GM12878 (cell line): ENCODE measurements at regions of chr15 and their contacts with region 1.

Region 1: DNA sequence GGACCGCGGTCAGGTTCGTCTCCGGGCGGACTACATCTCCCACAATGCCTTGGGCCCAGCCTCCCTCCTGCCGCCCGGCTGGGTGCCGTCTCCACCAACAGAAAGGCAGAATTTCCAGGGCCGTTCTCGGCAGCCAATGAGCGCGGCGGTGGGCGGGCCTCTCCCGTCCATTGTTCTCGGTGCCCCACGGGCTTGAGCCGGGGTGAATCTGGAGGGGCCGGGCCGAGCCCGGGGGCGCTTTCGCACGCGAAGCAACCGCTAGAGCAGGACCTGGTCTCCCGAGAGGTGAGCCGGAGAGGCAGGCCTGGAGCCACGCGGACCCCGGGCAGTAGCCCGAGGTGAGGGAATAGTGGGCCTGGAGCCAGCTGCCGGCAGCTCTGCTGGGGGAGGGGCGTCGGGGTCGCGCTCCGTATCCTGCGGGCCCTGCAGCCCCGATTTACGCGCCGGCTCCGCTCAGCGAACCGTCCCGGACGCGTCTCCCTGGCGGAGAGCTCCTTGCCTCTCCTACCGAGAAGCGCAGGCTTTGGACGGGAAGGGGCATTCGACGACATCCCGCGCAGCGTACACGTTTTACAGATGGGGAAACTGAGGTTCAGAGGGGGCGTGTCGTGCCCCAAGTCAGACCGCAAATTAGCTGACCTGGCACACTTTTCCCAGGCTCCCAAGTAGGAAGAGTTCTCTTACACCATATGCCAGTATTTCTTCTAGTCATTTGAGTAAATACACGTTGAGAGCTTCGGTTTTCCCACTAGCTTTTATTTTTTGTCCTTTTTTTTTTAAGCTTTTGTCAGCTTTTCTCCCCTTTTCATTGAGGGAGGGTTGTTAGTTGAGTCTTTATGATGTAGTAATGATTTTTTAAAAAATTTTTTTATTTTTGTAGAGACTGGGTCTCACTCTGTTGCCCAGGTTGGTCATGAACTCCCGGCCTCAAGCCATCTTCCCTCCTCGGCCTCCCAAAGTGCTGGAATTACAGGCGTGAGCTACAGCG is at the start of gene ZSCAN2:
- DNase-seq: peak; percentile 66
- ATAC-seq: peak; percentile 93
- H3K4me3 ChIP-seq: peak within 1 kb of the TSS; percentile 90
- H3K27ac ChIP-seq: peak within 1 kb of the TSS; percentile 27
- H3K4me1 ChIP-seq: peaks cover 42% of the 10 kb centered on the region
- H3K27me3 ChIP-seq: no peaks in the 10 kb centered on the region
- CTCF ChIP-seq: no peak
- EP300 ChIP-seq: peak in 1 of 2 experiments; percentile 32; a peak in 1 of 4 replicates
- POLR2A ChIP-seq: peak; percentile 71
- RAD21 ChIP-seq: no peak
- polyA plus RNA-seq, gene ZSCAN2: 2.7 to 3.0 TPM

Region 2: GRCh38 chr15:84633311-84634227 is 32.4 kb after region 1 on chr15:
- CTCF ChIA-PET with region 1: interaction called, 23 read pairs
- POLR2A ChIA-PET with region 1: interaction called, 6 read pairs
- RAD21 ChIA-PET with region 1: interaction called, 18 read pairs
- SMC1A ChIA-PET with region 1: interaction called, 22 read pairs
- in situ Hi-C with region 1: no loop called
- intact Hi-C with region 1: loop called (anchors 2 kb)
- DNase-seq: no peak
- ATAC-seq: peak; percentile 67
- H3K4me3 ChIP-seq: peak overlapping the region; percentile 65
- H3K27ac ChIP-seq: peak overlapping the region; percentile 5; the same call in 1 of the 2 replicates
- H3K4me1 ChIP-seq: peaks cover 9% of the 10 kb centered on the region
- H3K27me3 ChIP-seq: no peaks in the 10 kb centered on the region
- CTCF ChIP-seq: no peak
- EP300 ChIP-seq: no peak
- POLR2A ChIP-seq: peak; percentile 54
- RAD21 ChIP-seq: no peak

Region 3: GRCh38 chr15:84748274-84749110 is 147.3 kb after region 1 on chr15 and contains the start of gene ZNF592:
- CTCF ChIA-PET with region 1: interaction called, 3 read pairs
- POLR2A ChIA-PET with region 1: interaction called, 3 read pairs
- RAD21 ChIA-PET with region 1: interaction called, 4 read pairs
- SMC1A ChIA-PET with region 1: interaction called, 4 read pairs
- in situ Hi-C with region 1: no loop called
- intact Hi-C with region 1: loop called (anchors 5 kb)
- DNase-seq: no peak
- ATAC-seq: peak; percentile 51
- H3K4me3 ChIP-seq: peak within 1 kb of the TSS; percentile 84
- H3K27ac ChIP-seq: peak within 1 kb of the TSS; percentile 90
- H3K4me1 ChIP-seq: peaks cover 15% of the 10 kb centered on the region
- H3K27me3 ChIP-seq: no peaks in the 10 kb centered on the region
- CTCF ChIP-seq: peak in 2 of 3 experiments; percentile 25; a peak in 3 of 6 replicates
- EP300 ChIP-seq: no peak
- POLR2A ChIP-seq: peak; percentile 50
- RAD21 ChIP-seq: no peak
- polyA plus RNA-seq, gene ZNF592: 0.95 to 1.3 TPM

Region 4: DNA sequence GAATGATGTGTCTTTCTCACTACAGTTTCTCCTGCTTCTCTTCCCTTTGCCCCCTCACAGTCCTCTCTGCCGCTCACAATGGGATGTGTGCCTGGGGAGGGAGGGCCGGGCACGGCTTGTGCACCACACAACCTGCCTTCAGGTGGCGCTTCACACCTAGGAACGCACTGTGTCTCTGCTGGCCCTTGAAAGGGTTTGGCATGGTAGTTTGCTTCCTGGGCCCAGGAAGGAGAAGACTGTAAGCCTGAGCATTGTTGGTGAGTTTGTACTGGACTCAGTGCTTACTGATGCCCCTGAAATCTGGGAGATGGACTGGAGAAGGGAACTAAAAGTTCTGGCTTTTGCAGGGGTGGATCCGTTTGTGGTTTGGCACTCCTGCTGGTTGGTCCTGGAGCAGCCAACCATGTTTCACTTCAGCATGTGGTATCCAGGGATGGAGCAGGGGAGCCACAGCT is 225.3 kb after region 1 on chr15:
- CTCF ChIA-PET with region 1: interaction called, 28 read pairs
- POLR2A ChIA-PET with region 1: no interaction called
- RAD21 ChIA-PET with region 1: interaction called, 8 read pairs
- SMC1A ChIA-PET with region 1: interaction called, 15 read pairs
- in situ Hi-C with region 1: no loop called
- intact Hi-C with region 1: no loop called
- DNase-seq: no peak
- ATAC-seq: peak; percentile 88
- H3K4me3 ChIP-seq: no peak overlapping the region
- H3K27ac ChIP-seq: no peak overlapping the region
- H3K4me1 ChIP-seq: no peaks in the 10 kb centered on the region
- H3K27me3 ChIP-seq: peaks cover 0 to 4% of the 10 kb centered on the region in 2 experiments; a peak in 3 of 4 replicates
- CTCF ChIP-seq: peak; percentile 43 to 52 (median 47); a peak in 4 of 6 replicates
- EP300 ChIP-seq: no peak
- POLR2A ChIP-seq: no peak
- RAD21 ChIP-seq: peak; percentile 51

Region 5: DNA sequence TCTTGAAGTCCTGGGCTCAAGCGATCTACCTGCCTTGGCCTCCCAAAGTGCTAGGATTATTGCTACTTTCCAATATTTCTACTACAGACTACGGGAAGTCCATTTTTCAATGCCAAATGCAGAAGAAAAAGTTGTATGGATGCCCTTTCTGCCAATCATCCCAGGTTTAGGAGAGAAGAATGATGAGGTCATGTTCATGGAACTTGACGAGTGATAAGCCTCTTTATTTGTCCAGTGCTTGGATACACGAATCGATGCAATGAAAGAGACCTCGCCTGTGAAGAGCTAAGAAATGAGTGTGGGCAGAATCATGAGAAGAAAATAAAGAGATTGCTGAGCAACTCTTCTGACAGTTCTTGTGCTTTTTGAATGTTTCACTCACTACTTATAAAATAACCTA is 282.3 kb after region 1 on chr15:
- CTCF ChIA-PET with region 1: interaction called, 37 read pairs
- POLR2A ChIA-PET with region 1: no interaction called
- RAD21 ChIA-PET with region 1: interaction called, 12 read pairs
- SMC1A ChIA-PET with region 1: interaction called, 13 read pairs
- in situ Hi-C with region 1: no loop called
- intact Hi-C with region 1: no loop called
- DNase-seq: no peak
- ATAC-seq: no peak
- H3K4me3 ChIP-seq: no peak overlapping the region
- H3K27ac ChIP-seq: no peak overlapping the region
- H3K4me1 ChIP-seq: peaks cover 3% of the 10 kb centered on the region; the same call in 1 of the 2 replicates
- H3K27me3 ChIP-seq: 0 out of 4 replicates have a peak, but pooled peaks cover 0 to 2% of the 10 kb centered on the region in 2 experiments
- CTCF ChIP-seq: no peak
- EP300 ChIP-seq: no peak
- POLR2A ChIP-seq: no peak
- RAD21 ChIP-seq: no peak